ENCODE measurements at regions of chr7 and their contacts with region 1.

Region 1: GRCh38 chr7:124929467-124930172 is at the start of gene POT1:
- DNase-seq: peak; percentile 99
- H3K4me3 Mint-ChIP-seq: peak within 1 kb of the TSS; percentile 94
- H3K27ac Mint-ChIP-seq: peak within 1 kb of the TSS; percentile 95
- H3K4me1 Mint-ChIP-seq: peaks cover 34% of the 10 kb centered on the region
- H3K27me3 Mint-ChIP-seq: no peaks in the 10 kb centered on the region
- CTCF ChIP-seq: no peak
- total RNA-seq, gene POT1: 17.5 and 24.1 TPM in 2 replicates

Region 2: DNA sequence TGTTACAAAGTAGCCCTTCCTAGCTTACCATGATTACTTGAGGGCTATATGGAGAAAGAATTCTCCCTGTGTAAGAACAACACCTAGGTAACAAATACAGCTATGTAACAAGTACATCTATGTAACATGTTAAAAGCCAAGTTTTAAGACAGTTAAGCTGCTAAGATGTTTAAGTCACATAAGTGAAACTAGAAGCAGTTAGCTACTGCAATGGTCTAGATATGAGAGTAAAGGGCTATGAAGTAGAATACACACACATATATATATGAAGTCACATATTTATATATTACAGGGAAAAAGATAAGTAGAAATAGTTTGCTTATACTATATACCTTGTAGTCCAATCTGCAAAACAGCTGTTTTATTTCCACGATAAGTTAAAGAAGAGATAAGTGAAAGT is 14.4 kb before region 1 on chr7:
- CTCF ChIA-PET with region 1: no interaction called
- POLR2A ChIA-PET with region 1: interaction called, 13 read pairs
- intact Hi-C with region 1: no loop called
- DNase-seq: no peak
- H3K4me3 Mint-ChIP-seq: no peak overlapping the region
- H3K27ac Mint-ChIP-seq: no peak overlapping the region
- H3K4me1 Mint-ChIP-seq: no peaks in the 10 kb centered on the region
- H3K27me3 Mint-ChIP-seq: no peaks in the 10 kb centered on the region
- CTCF ChIP-seq: no peak

Region 3: GRCh38 chr7:124996778-124997177 is 67.2 kb after region 1 on chr7:
- CTCF ChIA-PET with region 1: no interaction called
- POLR2A ChIA-PET with region 1: no interaction called
- intact Hi-C with region 1: loop called (anchors 2 kb)
- DNase-seq: peak; percentile 54
- H3K4me3 Mint-ChIP-seq: no peak overlapping the region
- H3K27ac Mint-ChIP-seq: no peak overlapping the region
- H3K4me1 Mint-ChIP-seq: peaks cover 5% of the 10 kb centered on the region
- H3K27me3 Mint-ChIP-seq: no peaks in the 10 kb centered on the region
- CTCF ChIP-seq: no peak

Measured in MCF 10A (cell line).